ENCODE measurements at regions of chr2 and their contacts with region 1.

Region 1: GRCh38 chr2:116696223-116696622 is 1118.3 kb upstream of the DDX18 start:
- DNase-seq: no peak
- ATAC-seq: no peak
- H3K4me3 ChIP-seq: no peak overlapping the region
- H3K4me3 Mint-ChIP-seq: no peak overlapping the region
- H3K27ac ChIP-seq: no peak overlapping the region
- H3K27ac Mint-ChIP-seq: no peak overlapping the region
- H3K4me1 ChIP-seq: no peaks in the 10 kb centered on the region
- H3K4me1 Mint-ChIP-seq: no peaks in the 10 kb centered on the region
- H3K27me3 ChIP-seq: no peaks in the 10 kb centered on the region
- H3K27me3 Mint-ChIP-seq: no peaks in the 10 kb centered on the region
- CTCF ChIP-seq: no peak

Region 2: DNA sequence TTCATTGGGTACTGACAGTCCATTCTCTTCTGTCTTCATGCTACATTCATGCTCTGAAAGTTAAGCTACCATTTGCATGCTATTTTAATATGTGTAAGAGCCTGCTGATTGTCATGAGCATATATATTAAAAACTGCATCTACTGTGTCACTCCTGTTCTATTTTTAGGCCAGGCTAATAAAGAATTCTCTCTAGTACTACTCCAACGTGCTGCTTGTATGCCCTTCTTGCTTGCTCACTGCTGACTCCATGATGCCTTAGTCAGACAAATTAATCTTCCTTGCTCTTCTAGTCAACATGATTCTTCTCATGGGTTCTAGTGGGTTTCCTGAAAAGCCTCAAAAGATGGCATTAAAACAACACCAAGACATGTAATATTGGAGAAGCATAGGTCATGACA is 653.7 kb before region 1 on chr2:
- CTCF ChIA-PET with region 1: no interaction called
- POLR2A ChIA-PET with region 1: no interaction called
- intact Hi-C with region 1: no loop called
- DNase-seq: no peak
- ATAC-seq: no peak
- H3K4me3 ChIP-seq: no peak overlapping the region
- H3K4me3 Mint-ChIP-seq: no peak overlapping the region
- H3K27ac ChIP-seq: no peak overlapping the region
- H3K27ac Mint-ChIP-seq: no peak overlapping the region
- H3K4me1 ChIP-seq: no peaks in the 10 kb centered on the region
- H3K4me1 Mint-ChIP-seq: no peaks in the 10 kb centered on the region
- H3K27me3 ChIP-seq: no peaks in the 10 kb centered on the region
- H3K27me3 Mint-ChIP-seq: no peaks in the 10 kb centered on the region
- CTCF ChIP-seq: no peak

Region 3: DNA sequence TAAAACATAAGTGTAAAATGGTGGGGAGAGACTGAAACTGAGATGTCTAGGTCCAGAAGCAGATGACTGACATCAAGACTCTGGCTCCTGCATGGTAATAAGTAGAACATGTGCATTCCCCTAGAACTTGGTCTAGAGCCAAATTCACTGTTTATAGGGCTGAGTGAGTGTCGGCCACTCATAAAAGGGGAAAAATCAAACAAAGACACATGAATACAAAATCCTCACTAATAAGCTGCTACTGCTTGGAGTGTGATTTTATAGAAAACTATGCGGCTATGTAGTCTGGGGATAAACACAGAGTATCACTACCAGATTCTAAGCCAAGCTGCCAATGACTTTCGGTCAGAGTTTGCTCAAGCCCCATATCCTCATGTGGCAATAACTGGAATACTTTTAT is 37.5 kb after region 1 on chr2:
- CTCF ChIA-PET with region 1: no interaction called
- POLR2A ChIA-PET with region 1: no interaction called
- intact Hi-C with region 1: loop called in 1 of 2 experiments (anchors 1 kb)
- DNase-seq: no peak
- ATAC-seq: no peak
- H3K4me3 ChIP-seq: no peak overlapping the region
- H3K4me3 Mint-ChIP-seq: no peak overlapping the region
- H3K27ac ChIP-seq: no peak overlapping the region
- H3K27ac Mint-ChIP-seq: no peak overlapping the region
- H3K4me1 ChIP-seq: no peaks in the 10 kb centered on the region
- H3K4me1 Mint-ChIP-seq: no peaks in the 10 kb centered on the region
- H3K27me3 ChIP-seq: no peaks in the 10 kb centered on the region
- H3K27me3 Mint-ChIP-seq: no peaks in the 10 kb centered on the region
- CTCF ChIP-seq: no peak

Region 4: GRCh38 chr2:116754381-116755101 is 58.3 kb after region 1 on chr2:
- CTCF ChIA-PET with region 1: no interaction called
- POLR2A ChIA-PET with region 1: no interaction called
- intact Hi-C with region 1: no loop called
- DNase-seq: no peak
- ATAC-seq: no peak
- H3K4me3 ChIP-seq: no peak overlapping the region
- H3K4me3 Mint-ChIP-seq: no peak overlapping the region
- H3K27ac ChIP-seq: no peak overlapping the region
- H3K27ac Mint-ChIP-seq: no peak overlapping the region
- H3K4me1 ChIP-seq: no peaks in the 10 kb centered on the region
- H3K4me1 Mint-ChIP-seq: no peaks in the 10 kb centered on the region
- H3K27me3 ChIP-seq: no peaks in the 10 kb centered on the region
- H3K27me3 Mint-ChIP-seq: no peaks in the 10 kb centered on the region
- CTCF ChIP-seq: no peak